ENCODE measurements at regions of chr5 and their contacts with region 1.

Region 1: DNA sequence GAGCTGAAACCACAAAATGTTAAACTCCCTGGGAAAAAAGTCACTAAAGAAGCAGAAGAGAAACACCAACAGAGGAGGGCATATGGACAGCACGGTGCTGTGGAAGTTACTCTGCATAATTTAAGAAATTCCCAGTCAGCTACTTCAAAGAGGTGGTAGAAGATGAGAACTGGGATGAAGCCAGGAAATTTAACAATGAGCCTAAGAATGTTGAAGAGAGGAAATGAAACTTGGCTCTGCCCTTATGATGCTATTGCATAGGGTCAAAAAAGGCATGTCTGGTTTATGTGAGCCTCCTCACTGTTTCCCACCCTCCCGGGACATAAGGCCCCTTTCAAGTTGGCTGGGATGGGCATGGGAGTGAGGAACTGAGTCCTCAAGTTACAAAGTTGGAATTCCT is 25.4 kb upstream of the SNX18 start:
- DNase-seq: no peak
- ATAC-seq: no peak
- H3K4me3 ChIP-seq: no peak overlapping the region
- H3K27ac ChIP-seq: no peak overlapping the region
- H3K4me1 ChIP-seq: no peaks in the 10 kb centered on the region
- H3K27me3 ChIP-seq: no peaks in the 10 kb centered on the region
- CTCF ChIP-seq: no peak

Region 2: GRCh38 chr5:54443270-54443669 is 48.9 kb before region 1 on chr5:
- CTCF ChIA-PET with region 1: interaction called, 5 read pairs
- POLR2A ChIA-PET with region 1: no interaction called
- intact Hi-C with region 1: loop called (anchors 1 kb)
- DNase-seq: peak; percentile 41
- ATAC-seq: no peak
- H3K4me3 ChIP-seq: no peak overlapping the region
- H3K27ac ChIP-seq: no peak overlapping the region
- H3K4me1 ChIP-seq: no peaks in the 10 kb centered on the region
- H3K27me3 ChIP-seq: peaks cover 33% of the 10 kb centered on the region
- CTCF ChIP-seq: peak; percentile 54

Region 3: GRCh38 chr5:54624805-54625561 is 132.8 kb after region 1 on chr5:
- CTCF ChIA-PET with region 1: no interaction called
- POLR2A ChIA-PET with region 1: no interaction called
- intact Hi-C with region 1: no loop called
- DNase-seq: no peak
- ATAC-seq: no peak
- H3K4me3 ChIP-seq: no peak overlapping the region
- H3K27ac ChIP-seq: no peak overlapping the region
- H3K4me1 ChIP-seq: peaks cover 5% of the 10 kb centered on the region
- H3K27me3 ChIP-seq: no peaks in the 10 kb centered on the region
- CTCF ChIP-seq: no peak

Region 4: DNA sequence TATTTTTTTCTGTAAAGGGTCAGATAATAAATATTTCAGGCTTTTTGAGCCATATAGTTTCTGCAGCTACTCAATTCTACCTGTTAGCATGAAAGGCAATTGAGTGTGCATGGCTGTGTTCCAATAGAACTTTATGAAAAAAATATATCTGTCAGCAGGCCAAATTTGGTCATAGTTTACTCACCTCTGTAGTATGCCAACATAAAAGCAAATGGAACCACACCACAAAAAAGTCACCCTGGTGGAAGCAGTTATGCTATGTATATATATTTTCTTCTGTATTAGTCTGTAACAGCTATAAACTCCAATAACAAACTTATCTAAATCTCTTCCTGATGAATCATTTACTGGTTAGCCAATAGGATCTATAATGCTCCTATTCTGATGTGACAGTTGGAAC is 1216.6 kb after region 1 on chr5:
- CTCF ChIA-PET with region 1: no interaction called
- POLR2A ChIA-PET with region 1: no interaction called
- intact Hi-C with region 1: no loop called
- DNase-seq: peak; percentile 88
- ATAC-seq: peak; percentile 55
- H3K4me3 ChIP-seq: 0 out of 2 replicates have a peak overlapping the region, but pooled peaks have one; percentile 30
- H3K27ac ChIP-seq: peak overlapping the region; percentile 62
- H3K4me1 ChIP-seq: peaks cover 23% of the 10 kb centered on the region
- H3K27me3 ChIP-seq: no peaks in the 10 kb centered on the region
- CTCF ChIP-seq: no peak

Measured in PC-3 (cell line).